SK-N-SH (cell line): ENCODE measurements at regions of chr12 and their contacts with region 1.

Region 1: GRCh38 chr12:131912518-131913294 is 16.4 kb upstream of the PUS1 start:
- DNase-seq: peak; percentile 98
- H3K4me3 ChIP-seq: no peak overlapping the region
- H3K27ac ChIP-seq: peak overlapping the region; percentile 59 to 88; a peak in 3 of 4 replicates
- H3K4me1 ChIP-seq: peaks cover 9 to 27% of the 10 kb centered on the region in 2 experiments; a peak in 2 of 4 replicates
- H3K27me3 ChIP-seq: no peaks in the 10 kb centered on the region
- CTCF ChIP-seq: peak; percentile 22
- EP300 ChIP-seq: 0 out of 4 replicates have a peak, but pooled peaks of 1 of the 2 experiments have one; percentile 8
- RAD21 ChIP-seq: peak; percentile 45

Region 2: DNA sequence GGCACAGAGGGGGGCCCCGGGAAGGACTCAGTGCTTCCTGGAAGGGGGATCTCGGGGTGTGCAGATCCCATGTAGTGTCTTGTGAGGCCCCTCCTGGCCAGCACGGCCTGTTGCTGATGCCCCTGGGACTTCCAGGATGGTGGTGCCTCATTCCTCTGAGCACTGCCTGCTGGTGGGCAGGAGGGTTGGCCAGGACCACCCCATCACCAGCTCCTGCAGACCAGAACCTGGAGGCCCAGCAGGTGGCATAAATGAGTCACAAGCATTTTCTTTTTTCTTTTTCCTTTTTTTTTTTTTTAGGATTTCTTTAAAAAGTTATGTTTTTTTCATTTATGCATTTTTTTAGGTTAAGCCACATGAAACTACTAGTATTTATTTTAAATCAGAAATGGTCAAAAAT is 76.5 kb before region 1 on chr12:
- CTCF ChIA-PET with region 1: interaction called, 23 read pairs
- POLR2A ChIA-PET with region 1: interaction called, 3 read pairs
- DNase-seq: peak; percentile 75
- H3K4me3 ChIP-seq: no peak overlapping the region
- H3K27ac ChIP-seq: no peak overlapping the region
- H3K4me1 ChIP-seq: peaks cover 3 to 21% of the 10 kb centered on the region in 2 experiments; a peak in 1 of 4 replicates
- H3K27me3 ChIP-seq: no peaks in the 10 kb centered on the region
- CTCF ChIP-seq: peak; percentile 62
- EP300 ChIP-seq: no peak
- RAD21 ChIP-seq: peak; percentile 61

Region 3: DNA sequence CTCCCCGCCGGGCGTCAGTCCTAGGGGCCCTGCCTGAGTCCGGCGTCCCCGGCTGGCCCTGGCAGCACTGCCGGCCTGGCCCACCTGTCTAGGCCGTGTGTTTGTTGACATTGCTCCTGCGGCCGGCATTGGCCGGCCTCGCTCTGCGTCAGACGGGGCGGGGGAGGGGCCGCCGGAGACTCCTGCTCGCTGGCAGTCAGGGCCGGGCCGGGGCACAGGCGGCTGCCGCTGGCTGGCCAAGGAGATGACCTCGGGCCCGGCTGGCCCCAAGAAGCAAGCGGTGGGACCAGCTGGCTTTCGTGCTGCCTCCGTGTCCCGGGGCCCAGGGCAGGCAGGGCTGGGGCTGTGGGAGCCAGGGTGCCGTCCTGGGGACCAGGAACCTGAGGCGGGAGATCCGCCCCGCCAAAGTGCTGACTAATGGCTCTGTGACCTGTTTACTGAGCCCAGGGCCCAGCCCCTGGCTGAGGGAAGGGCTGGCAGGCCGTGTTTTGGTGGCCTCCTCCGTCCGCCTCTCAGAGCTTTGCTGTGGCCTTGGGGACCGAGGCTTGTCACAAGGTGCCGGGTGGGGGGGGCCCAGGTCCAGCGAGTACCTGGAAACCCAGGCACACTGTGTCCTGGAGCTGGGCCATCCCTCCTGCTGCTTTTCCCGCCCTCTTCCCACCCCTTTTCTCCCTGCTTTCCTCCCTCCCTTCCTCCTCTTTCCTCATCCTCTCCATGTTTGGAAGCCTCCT is 16.5 kb before region 1 on chr12:
- CTCF ChIA-PET with region 1: interaction called, 12 read pairs
- POLR2A ChIA-PET with region 1: no interaction called
- DNase-seq: peak; percentile 92
- H3K4me3 ChIP-seq: peak overlapping the region; percentile 62 to 72
- H3K27ac ChIP-seq: peak overlapping the region in 1 of 2 experiments; percentile 49; a peak in 2 of 4 replicates
- H3K4me1 ChIP-seq: peaks cover 7 to 23% of the 10 kb centered on the region in 2 experiments; a peak in 1 of 4 replicates
- H3K27me3 ChIP-seq: no peaks in the 10 kb centered on the region
- CTCF ChIP-seq: no peak
- EP300 ChIP-seq: peak in 1 of 2 experiments; percentile 17; a peak in 1 of 4 replicates
- RAD21 ChIP-seq: no peak

Region 4: DNA sequence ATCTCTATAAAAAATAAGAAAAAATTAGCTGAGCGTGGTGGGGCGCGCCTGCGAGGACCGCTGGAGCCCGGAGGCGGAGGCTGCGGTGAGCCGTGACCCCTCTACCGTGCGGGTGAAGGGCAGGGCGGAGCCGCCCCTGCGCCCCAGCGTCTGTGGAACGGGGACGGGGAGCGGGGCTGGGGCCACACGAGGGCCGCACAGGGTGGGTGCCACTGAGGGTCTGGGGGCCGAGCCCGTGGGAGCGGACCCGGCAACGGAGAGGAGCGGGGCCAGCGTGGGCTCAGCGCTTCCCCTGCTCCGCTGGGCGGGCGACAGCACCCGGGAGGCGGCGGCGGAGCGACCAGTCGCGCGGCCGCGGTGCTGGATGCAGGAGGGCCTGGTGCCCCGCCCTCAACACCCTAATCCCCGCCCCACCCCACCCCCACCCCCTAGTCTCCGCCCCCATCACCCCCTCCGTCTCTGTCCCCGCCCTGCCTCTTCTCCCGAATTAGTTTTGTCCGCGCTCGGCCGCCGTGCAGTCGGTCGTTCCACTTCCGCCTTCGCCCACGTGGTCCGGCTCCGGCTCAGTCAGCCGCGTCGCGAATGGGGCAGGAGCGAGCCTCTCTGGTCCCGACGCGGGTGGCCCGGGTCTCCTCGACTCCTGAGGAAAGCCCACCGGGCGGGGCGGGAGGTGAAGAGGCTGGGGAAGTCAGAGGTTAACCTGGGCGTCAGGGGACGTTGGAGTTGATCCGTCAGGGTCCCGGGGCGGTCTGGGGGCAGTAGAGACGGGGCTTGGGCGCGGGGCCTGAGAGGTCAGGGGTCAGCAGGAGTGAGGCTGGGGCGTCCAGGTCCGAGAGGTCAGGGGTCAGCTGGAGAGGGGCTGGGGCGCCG is 16.2 kb after region 1 on chr12 and contains the start of gene PUS1:
- CTCF ChIA-PET with region 1: interaction called, 12 read pairs
- POLR2A ChIA-PET with region 1: interaction called, 3 read pairs
- DNase-seq: peak; percentile 100
- H3K4me3 ChIP-seq: peak within 1 kb of the TSS; percentile 83 to 89
- H3K27ac ChIP-seq: peak within 1 kb of the TSS; percentile 35 to 75; a peak in 3 of 4 replicates
- H3K4me1 ChIP-seq: peaks cover 3 to 7% of the 10 kb centered on the region in 2 experiments; a peak in 1 of 4 replicates
- H3K27me3 ChIP-seq: no peaks in the 10 kb centered on the region
- CTCF ChIP-seq: no peak
- EP300 ChIP-seq: no peak
- RAD21 ChIP-seq: no peak
- polyA plus RNA-seq, gene PUS1: 52.1 and 53.1 TPM in 2 replicates